ENCODE measurements at regions of chr10 and their contacts with region 1.

Region 1: DNA sequence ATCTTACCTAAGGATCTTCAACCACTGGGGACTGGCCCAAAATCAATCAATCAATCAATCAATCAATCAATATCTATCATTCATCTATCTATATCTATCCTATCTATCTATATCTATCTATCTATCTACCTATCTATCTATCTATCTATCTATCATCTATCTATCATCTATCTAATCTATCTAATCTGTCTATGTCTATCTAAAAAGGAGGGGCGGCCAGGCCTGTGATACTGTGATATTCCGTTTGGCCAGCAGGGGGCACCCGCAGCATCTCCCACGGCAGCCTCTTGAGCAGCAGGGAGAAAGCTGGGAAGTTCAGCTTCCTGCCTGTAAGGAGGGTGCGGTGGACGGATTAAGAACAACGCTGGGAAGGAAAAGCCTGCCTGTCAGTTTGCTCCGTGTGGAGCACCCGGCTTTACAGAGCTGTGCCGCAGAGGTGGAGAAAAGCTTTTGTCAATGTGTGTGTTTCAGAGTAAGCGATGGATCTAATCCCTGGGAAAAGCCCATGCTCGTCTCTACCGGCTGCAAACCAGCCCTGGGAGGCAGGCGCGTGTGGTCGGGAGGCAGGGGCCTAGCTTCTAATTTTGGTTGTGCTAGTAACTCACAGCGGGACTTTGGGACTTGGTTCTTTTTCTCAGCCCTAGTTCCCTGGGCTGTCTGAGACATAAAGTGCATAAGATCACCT is 125.0 kb downstream of the SH2D4B start:
- DNase-seq: peak in 1 of 2 experiments; percentile 75
- H3K4me3 ChIP-seq: no peak overlapping the region
- H3K27ac ChIP-seq: no peak overlapping the region
- H3K4me1 ChIP-seq: no peaks in the 10 kb centered on the region
- H3K27me3 ChIP-seq: peaks cover 38% of the 10 kb centered on the region
- CTCF ChIP-seq: peak; percentile 97

Region 2: GRCh38 chr10:80599424-80599847 is 63.3 kb before region 1 on chr10:
- CTCF ChIA-PET with region 1: no interaction called
- POLR2A ChIA-PET with region 1: no interaction called
- intact Hi-C with region 1: no loop called
- DNase-seq: peak in 1 of 2 experiments; percentile 5
- H3K4me3 ChIP-seq: no peak overlapping the region
- H3K27ac ChIP-seq: no peak overlapping the region
- H3K4me1 ChIP-seq: no peaks in the 10 kb centered on the region
- H3K27me3 ChIP-seq: 0 out of 2 replicates have a peak, but pooled peaks cover 4% of the 10 kb centered on the region
- CTCF ChIP-seq: peak; percentile 77

Region 3: DNA sequence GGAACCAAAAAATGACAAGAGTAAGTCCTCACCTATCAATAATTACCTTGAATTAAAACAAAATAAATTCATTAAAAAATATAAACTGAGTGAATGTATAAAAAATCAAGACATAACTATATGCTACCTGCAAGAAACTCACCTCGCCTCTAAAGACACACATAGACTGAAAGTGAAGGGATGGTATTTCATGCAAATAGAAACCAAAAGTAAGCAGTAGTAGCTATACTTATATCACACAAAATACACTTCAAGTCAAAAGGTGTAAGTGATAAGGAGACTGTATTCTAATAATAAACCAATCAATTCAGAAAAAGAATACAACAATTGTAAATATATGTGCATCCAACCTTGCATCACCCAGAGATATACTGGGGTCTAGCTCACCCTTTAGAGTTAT is 207.6 kb after region 1 on chr10:
- CTCF ChIA-PET with region 1: no interaction called
- POLR2A ChIA-PET with region 1: no interaction called
- intact Hi-C with region 1: no loop called
- DNase-seq: no peak
- H3K4me3 ChIP-seq: no peak overlapping the region
- H3K27ac ChIP-seq: no peak overlapping the region
- H3K4me1 ChIP-seq: no peaks in the 10 kb centered on the region
- H3K27me3 ChIP-seq: no peaks in the 10 kb centered on the region
- CTCF ChIP-seq: no peak

Region 4: GRCh38 chr10:81018708-81019365 is 356.1 kb after region 1 on chr10:
- CTCF ChIA-PET with region 1: interaction called, 4 read pairs
- POLR2A ChIA-PET with region 1: no interaction called
- intact Hi-C with region 1: loop called (anchors 5 kb)
- DNase-seq: peak in 1 of 2 experiments; percentile 11
- H3K4me3 ChIP-seq: no peak overlapping the region
- H3K27ac ChIP-seq: no peak overlapping the region
- H3K4me1 ChIP-seq: no peaks in the 10 kb centered on the region
- H3K27me3 ChIP-seq: no peaks in the 10 kb centered on the region
- CTCF ChIP-seq: peak; percentile 81

Region 5: GRCh38 chr10:81152656-81153055 is 489.9 kb after region 1 on chr10:
- CTCF ChIA-PET with region 1: no interaction called
- POLR2A ChIA-PET with region 1: no interaction called
- intact Hi-C with region 1: no loop called
- DNase-seq: no peak
- H3K4me3 ChIP-seq: no peak overlapping the region
- H3K27ac ChIP-seq: no peak overlapping the region
- H3K4me1 ChIP-seq: no peaks in the 10 kb centered on the region
- H3K27me3 ChIP-seq: no peaks in the 10 kb centered on the region
- CTCF ChIP-seq: no peak